Activated naive CD4-positive, alpha-beta T cell treated with anti-CD3 and anti-CD28 coated beads for 36 hours (primary cell): ENCODE measurements at regions of chr15 and their contacts with region 1.

Region 1: GRCh38 chr15:67839929-67840748 is at the start of gene RNU6-1:
- DNase-seq: peak; percentile 94
- H3K4me3 Mint-ChIP-seq: peak within 1 kb of the TSS; percentile 89
- H3K27ac Mint-ChIP-seq: peak within 1 kb of the TSS; percentile 93
- H3K4me1 Mint-ChIP-seq: peaks cover 24% of the 10 kb centered on the region
- H3K27me3 Mint-ChIP-seq: peaks cover 15% of the 10 kb centered on the region
- total RNA-seq, gene RNU6-1: not detected

Region 2: GRCh38 chr15:66946578-66947164 is 893.5 kb before region 1 on chr15:
- CTCF ChIA-PET with region 1: interaction called, 3 read pairs
- intact Hi-C with region 1: loop called (anchors 1 kb)
- DNase-seq: peak; percentile 85
- H3K4me3 Mint-ChIP-seq: no peak overlapping the region
- H3K27ac Mint-ChIP-seq: no peak overlapping the region
- H3K4me1 Mint-ChIP-seq: no peaks in the 10 kb centered on the region
- H3K27me3 Mint-ChIP-seq: no peaks in the 10 kb centered on the region

Region 3: DNA sequence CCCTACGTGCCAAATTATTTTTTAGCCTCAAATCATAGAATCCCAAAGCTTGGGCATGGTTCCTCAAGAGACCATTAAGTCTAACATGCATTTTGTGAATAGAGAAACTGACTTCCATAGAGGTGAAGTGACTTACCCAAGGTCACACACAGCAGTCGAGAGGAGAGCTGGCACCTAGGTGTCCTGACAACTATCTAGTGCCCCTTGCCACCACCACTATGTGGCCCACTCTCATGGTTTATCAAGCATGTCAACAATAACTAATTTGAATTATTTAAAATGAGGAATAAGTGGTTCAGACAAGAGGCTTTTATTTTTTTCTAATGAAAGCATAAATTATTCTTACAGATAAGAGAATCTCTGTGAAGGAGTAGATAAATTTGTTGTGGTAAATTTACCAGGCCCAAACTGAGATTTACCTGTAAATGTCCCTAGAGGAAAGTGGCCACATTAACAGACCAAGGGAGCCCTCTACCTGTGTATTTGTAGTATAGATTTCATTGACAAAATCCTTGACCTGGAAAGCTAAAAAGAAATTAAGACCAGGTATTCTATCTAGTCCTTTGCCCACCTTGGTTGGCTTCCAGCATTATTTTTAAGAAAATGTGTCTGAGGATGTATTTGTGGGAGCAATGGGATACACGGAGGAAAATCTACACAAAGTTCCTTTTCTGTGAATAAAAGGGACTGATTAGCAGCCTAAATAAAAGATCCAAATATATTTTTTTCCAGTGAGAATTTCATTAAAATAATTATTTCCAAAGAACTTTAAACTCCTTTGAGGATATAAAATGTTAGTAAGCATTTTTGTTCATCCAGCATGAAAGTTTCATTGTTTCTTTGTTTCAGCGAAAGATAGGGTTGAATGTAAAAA is 536.4 kb before region 1 on chr15:
- CTCF ChIA-PET with region 1: no interaction called
- intact Hi-C with region 1: loop called (anchors 2 kb)
- DNase-seq: peak; percentile 41
- H3K4me3 Mint-ChIP-seq: no peak overlapping the region
- H3K27ac Mint-ChIP-seq: no peak overlapping the region
- H3K4me1 Mint-ChIP-seq: peaks cover 15% of the 10 kb centered on the region
- H3K27me3 Mint-ChIP-seq: no peaks in the 10 kb centered on the region

Region 4: GRCh38 chr15:67521029-67521811 is 318.9 kb before region 1 on chr15 and contains the start of gene C15orf61:
- CTCF ChIA-PET with region 1: interaction called, 5 read pairs
- intact Hi-C with region 1: loop called (anchors 1 kb)
- DNase-seq: peak; percentile 89
- H3K4me3 Mint-ChIP-seq: peak within 1 kb of the TSS; percentile 92
- H3K27ac Mint-ChIP-seq: peak within 1 kb of the TSS; percentile 95
- H3K4me1 Mint-ChIP-seq: peaks cover 23% of the 10 kb centered on the region
- H3K27me3 Mint-ChIP-seq: no peaks in the 10 kb centered on the region
- total RNA-seq, gene C15orf61: 6.2 to 7.2 TPM

Region 5: DNA sequence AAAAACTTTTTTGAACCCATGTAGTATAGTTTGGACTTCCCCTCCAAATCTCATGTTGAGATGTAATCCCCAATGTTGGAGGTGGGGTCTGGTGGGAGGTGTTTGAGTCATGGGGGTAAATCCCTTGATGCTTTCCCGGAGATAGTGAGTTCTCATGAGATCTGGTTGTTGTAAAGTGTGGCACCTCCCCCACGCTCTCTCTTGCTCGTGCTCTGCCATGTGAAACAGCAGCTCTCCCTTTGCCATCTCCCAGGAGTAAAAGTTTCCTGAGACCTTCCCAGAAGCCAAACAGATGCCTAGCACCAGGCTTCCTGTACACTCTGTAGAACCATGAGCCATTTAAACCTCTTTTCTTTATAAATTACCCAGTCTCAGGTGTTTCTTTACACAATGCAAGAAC is 15.7 kb after region 1 on chr15:
- CTCF ChIA-PET with region 1: no interaction called
- intact Hi-C with region 1: loop called (anchors 1 kb)
- DNase-seq: peak; percentile 65
- H3K4me3 Mint-ChIP-seq: no peak overlapping the region
- H3K27ac Mint-ChIP-seq: peak overlapping the region; percentile 43
- H3K4me1 Mint-ChIP-seq: peaks cover 10% of the 10 kb centered on the region
- H3K27me3 Mint-ChIP-seq: peaks cover 3% of the 10 kb centered on the region

Region 6: DNA sequence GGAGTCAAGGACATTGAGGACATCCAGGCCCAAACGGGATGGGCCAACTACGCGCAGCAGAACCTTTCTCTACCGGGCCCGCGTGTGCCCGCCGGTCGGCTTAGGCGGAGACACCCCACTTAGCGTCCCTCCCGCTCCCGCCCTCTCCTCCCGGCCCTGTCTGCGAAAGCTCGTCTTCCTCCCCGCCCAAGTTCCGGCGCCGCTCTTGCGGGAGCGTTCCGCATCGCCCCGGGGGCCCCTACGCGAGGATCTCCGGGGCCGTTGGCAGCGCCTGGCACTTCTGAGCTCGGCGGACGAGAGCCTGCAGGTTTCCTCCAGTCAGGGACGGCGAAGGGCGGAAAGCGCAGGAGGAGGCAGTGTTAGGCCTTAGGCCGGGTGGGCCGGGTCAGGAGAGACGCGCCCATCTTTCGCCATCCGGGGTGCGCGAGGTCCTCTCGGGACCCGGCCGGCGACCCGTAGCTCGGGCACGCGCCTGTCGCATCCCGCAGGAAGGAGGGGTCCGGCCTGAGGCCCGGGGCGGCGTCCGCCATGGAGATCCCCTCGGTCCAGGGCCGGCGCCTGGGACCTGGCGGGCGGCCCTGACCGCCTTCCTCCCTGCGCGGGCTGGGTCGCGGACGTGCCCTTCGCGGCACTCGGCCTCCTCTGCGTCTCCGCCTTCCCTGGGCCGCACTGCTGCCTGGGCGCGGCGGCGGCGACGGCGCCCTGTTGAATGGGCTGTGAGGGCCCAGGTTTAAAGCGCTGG is 437.6 kb after region 1 on chr15 and contains the start of gene FEM1B:
- CTCF ChIA-PET with region 1: no interaction called
- intact Hi-C with region 1: loop called (anchors 1 kb)
- DNase-seq: peak; percentile 89
- H3K4me3 Mint-ChIP-seq: peak within 1 kb of the TSS; percentile 97
- H3K27ac Mint-ChIP-seq: peak within 1 kb of the TSS; percentile 97
- H3K4me1 Mint-ChIP-seq: peaks cover 46% of the 10 kb centered on the region
- H3K27me3 Mint-ChIP-seq: no peaks in the 10 kb centered on the region
- total RNA-seq, gene FEM1B: 30.3 to 34.2 TPM

Region 7: GRCh38 chr15:68862415-68862814 is 1022.3 kb after region 1 on chr15:
- CTCF ChIA-PET with region 1: no interaction called
- intact Hi-C with region 1: no loop called
- DNase-seq: no peak
- H3K4me3 Mint-ChIP-seq: no peak overlapping the region
- H3K27ac Mint-ChIP-seq: no peak overlapping the region
- H3K4me1 Mint-ChIP-seq: no peaks in the 10 kb centered on the region
- H3K27me3 Mint-ChIP-seq: peaks cover 5% of the 10 kb centered on the region